Posterior vena cava (tissue), 2 donors: ENCODE measurements at regions of chr14 and their contacts with region 1.

Region 1: DNA sequence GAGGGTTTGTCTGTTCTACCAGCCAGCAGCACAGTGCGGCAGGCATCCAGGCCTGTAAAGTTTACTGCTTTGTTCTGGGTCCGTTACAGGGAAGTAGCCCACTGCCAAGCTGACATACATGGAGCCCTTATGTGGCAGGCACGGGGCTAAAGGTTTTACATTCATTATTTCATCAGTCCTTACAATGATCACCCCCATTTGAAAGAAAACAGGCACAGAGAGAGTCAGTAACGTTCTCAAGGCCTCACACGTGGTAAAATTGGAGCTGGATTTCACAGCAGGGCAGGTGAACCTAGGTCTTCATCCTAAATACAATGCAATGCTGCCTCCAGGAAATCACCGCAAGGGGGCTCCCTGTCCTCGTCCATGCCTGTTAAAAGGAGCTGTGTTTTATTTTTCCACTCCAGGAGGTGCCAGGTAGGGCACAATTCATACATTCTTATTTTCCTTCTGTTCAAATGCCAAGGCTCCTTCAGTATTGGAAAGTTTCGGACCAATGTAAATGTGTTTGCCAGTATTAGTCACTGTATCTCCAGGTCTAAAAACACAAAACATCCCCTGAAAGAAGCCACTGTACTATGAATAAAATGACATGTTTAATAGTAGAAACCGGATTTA is 172.2 kb upstream of the GZMB start:
- DNase-seq: peak; percentile 83

Region 2: GRCh38 chr14:24828486-24828885 is 22.3 kb after region 1 on chr14:
- intact Hi-C with region 1: no loop called
- DNase-seq: no peak

Region 3: GRCh38 chr14:24964566-24964965 is 158.4 kb after region 1 on chr14:
- intact Hi-C with region 1: no loop called
- DNase-seq: no peak

Region 4: GRCh38 chr14:25132732-25133422 is 326.7 kb after region 1 on chr14:
- intact Hi-C with region 1: loop called in 1 of 2 experiments (anchors 10 kb)
- DNase-seq: peak; percentile 87

Region 5: GRCh38 chr14:25140411-25140810 is 334.2 kb after region 1 on chr14:
- intact Hi-C with region 1: loop called (anchors 10 kb)
- DNase-seq: no peak

Region 6: DNA sequence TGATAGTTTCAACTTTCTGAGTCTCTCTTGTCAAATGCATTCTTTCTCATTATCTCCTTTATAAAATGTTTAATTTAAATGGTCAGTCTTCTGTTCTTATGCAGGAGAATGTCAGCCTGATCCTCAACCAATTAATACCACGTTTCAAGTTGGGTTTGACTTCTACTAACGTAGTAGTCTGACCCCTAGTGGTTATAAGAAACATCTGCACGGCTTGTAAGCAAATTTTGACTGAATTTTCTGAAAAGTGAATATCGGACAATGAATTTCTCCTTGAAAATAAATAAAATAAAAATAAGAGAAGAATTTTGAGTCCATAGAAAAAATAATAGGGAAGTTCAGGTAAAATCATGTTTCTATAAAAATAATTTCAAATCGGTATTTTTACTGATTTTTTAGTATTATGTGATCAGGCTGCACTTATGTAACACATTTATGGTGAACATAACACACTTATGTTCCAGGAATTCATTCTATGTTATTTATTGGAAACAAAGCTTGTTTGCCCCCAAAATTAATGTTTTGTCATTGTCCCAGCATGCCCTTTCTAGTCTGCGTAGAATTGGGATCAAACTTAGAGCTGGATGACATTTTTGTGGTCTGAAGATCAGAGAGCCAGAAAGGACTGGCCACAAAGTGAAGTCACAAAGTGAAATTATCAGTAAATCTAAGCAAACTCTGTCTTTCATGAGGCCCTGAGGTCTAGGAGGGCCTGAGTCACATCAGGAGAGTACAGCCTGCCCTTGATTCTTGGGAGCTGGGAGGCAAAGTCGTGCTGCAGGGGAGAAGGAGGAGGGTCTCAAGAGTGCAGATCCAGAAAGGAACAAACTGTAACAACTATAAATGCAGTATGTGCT is 345.0 kb after region 1 on chr14:
- intact Hi-C with region 1: loop called (anchors 5 to 10 kb)
- DNase-seq: no peak